Gastrocnemius medialis (tissue), 4 donors: ENCODE measurements at regions of chr7 and their contacts with region 1.

Region 1: DNA sequence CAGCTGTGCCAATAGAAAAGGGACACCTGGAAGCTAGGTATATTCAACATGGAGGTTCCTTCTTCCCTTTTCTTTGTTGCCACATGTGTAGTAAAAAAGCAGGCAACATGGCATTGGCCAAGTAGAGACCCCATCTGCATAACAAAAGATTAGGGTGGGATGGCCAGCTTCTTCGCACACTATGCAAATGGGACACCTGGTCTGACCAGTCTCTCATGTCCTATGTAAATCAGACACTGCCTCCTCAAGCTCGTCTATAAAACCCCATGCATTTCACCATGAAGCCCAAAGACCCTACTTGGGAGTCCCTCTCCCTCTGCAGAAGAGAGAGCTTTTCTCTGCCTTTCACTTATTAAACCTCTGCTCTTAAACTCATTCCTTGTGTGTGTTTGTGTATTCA is 53.9 kb downstream of the MYL10 start:
- DNase-seq: no peak
- ATAC-seq: no peak
- H3K4me3 ChIP-seq: no peak overlapping the region
- H3K27ac ChIP-seq: no peak overlapping the region
- H3K4me1 ChIP-seq: no peaks in the 10 kb centered on the region
- H3K27me3 ChIP-seq: peaks cover 0 to 4% (median 0%) of the 10 kb centered on the region in 3 donors
- CTCF ChIP-seq: no peak
- POLR2A ChIP-seq: no peak

Region 2: DNA sequence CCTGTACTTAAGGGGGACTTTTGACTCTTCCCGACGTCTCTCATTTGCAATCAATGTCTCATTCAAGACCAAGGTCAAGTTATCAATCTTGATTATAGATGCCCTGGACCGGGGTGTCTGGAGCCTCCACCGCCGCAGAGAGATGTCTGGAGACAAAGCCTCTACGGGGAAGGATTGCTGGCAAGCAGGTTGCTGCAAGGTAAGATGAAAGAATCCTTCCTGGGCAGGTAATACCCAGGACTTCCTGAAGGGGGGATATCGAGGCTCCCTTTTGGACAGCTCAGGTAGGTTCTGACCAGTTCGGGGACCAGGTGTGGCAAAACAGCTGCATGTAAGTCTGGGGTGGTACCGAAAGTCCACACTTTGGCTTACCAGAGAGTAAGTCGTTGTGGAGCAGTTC is 229.8 kb after region 1 on chr7:
- in situ Hi-C with region 1: no loop called
- intact Hi-C with region 1: loop called (anchors 10 kb)
- DNase-seq: no peak
- ATAC-seq: no peak
- H3K4me3 ChIP-seq: no peak overlapping the region
- H3K27ac ChIP-seq: no peak overlapping the region
- H3K4me1 ChIP-seq: peaks cover 6 to 7% of the 10 kb centered on the region in 2 donors
- H3K27me3 ChIP-seq: peaks cover 21 to 30% (median 26%) of the 10 kb centered on the region in 3 donors
- CTCF ChIP-seq: peak in 1 of 5 experiments; percentile 12
- POLR2A ChIP-seq: no peak

Region 3: DNA sequence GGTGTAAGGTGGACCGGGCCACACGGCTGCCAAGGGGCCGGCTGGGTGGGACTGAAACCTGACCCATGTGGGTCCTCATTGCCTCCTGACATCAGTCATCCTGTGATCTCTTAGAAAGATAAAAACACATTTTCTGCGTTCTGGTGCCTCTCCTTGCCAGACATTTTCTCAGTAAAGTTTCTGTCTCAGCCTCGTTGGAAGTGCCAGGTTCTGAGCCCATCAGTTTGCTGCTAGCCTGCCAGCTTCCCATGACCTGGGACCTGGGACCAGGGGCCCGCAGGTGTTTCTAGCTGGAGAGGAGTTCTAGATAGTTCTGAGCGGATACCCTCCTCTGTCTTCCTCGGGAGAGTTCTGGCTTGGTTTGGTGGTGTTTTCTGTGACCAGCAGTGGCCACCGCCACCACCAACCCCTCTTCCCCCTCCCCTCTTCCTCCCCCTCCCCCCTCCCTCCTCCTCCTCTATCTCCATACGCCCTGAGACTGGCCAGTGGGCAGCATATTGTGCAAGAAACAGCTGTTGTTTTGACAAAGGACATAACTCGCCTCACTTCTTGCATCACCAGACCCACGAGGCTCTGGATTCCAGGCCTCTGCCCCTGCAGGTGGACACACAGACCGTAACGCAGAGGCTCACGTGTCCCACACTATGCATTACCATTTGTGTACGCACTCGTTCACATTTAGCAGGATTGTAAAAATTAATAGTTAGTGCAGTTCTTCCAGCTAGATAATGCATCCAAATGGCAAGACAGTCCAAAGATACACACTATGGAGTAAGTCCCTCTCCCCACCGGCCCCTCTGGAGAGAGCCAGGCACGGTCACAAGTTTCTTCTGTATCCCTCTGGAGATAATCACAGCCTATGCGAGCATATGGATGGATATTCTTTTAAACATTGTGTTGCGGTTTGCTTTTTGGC is 336.9 kb after region 1 on chr7:
- in situ Hi-C with region 1: no loop called
- intact Hi-C with region 1: no loop called
- DNase-seq: peak; percentile 95 to 96
- ATAC-seq: peak; percentile 89 to 90
- H3K4me3 ChIP-seq: peak overlapping the region in 1 of 4 donors; percentile 20
- H3K27ac ChIP-seq: peak overlapping the region; percentile 92 to 97 (median 93)
- H3K4me1 ChIP-seq: peaks cover 45 to 46% of the 10 kb centered on the region in 2 donors
- H3K27me3 ChIP-seq: no peaks in the 10 kb centered on the region
- CTCF ChIP-seq: peak in 3 of 5 experiments; percentile 19 to 24 (median 23)
- POLR2A ChIP-seq: peak in 1 of 2 donors; percentile 44